ENCODE measurements at regions of chr6 and their contacts with region 1.

Region 1: GRCh38 chr6:30717042-30717844 is at the start of gene MDC1:
- DNase-seq: peak; percentile 100
- ATAC-seq: peak; percentile 79
- H3K4me3 Mint-ChIP-seq: peak within 1 kb of the TSS; percentile 99
- H3K27ac Mint-ChIP-seq: peak within 1 kb of the TSS; percentile 100
- H3K4me1 Mint-ChIP-seq: peaks cover 52% of the 10 kb centered on the region
- H3K27me3 Mint-ChIP-seq: no peaks in the 10 kb centered on the region
- total RNA-seq, gene MDC1: 67.4 to 83.9 TPM

Region 2: GRCh38 chr6:30259140-30260035 is 457.9 kb before region 1 on chr6:
- CTCF ChIA-PET with region 1: no interaction called
- DNase-seq: peak; percentile 71
- ATAC-seq: peak; percentile 91
- H3K4me3 Mint-ChIP-seq: peak overlapping the region; percentile 85
- H3K27ac Mint-ChIP-seq: peak overlapping the region; percentile 73
- H3K4me1 Mint-ChIP-seq: peaks cover 18% of the 10 kb centered on the region
- H3K27me3 Mint-ChIP-seq: peaks cover 36% of the 10 kb centered on the region

Region 3: GRCh38 chr6:30614843-30615218 is 102.4 kb before region 1 on chr6:
- CTCF ChIA-PET with region 1: interaction called, 24 read pairs
- DNase-seq: peak; percentile 94
- ATAC-seq: peak; percentile 59
- H3K4me3 Mint-ChIP-seq: peak overlapping the region; percentile 97
- H3K27ac Mint-ChIP-seq: peak overlapping the region; percentile 100
- H3K4me1 Mint-ChIP-seq: peaks cover 57% of the 10 kb centered on the region
- H3K27me3 Mint-ChIP-seq: peaks cover 3% of the 10 kb centered on the region

Region 4: DNA sequence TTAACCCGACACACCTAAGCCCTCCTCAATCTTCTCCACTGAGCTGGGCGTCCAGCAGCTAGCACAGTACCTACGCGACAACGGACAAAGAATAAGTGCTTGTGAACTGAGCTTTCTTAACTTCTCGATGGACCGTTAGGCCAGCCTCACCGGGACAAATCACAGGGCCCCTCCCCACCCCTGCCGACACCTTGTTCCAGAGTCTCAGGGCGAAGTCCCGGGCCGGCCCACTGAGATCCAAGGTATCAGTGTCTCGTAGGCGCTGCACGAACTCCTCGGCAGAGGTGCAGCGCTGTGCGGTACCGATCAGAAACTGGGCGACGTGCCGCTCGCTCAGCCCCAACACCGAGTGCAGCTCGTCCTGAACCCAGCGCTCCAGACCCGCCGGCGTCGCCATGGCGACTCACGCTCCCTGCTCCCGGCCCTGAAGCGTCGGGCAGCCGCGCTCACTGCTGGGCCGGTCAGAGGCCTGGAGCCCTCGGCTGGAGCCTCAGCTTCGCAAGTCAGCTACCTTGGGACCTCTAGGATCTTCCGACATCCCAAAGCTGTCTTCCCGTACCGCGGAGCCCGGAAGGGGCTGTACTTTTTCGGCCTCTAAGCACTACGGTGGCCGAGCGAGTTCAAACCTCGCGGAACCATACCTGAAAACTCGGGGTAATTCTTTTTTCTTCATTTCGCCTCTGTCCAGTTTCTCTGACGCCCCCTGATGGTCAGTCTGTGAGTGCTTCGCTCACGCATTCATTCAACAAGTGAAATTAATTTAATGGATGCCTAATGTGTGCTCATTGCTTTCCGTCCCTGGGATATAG is 44.6 kb before region 1 on chr6 and contains the start of gene DHX16:
- CTCF ChIA-PET with region 1: interaction called, 936 read pairs
- DNase-seq: peak; percentile 95
- ATAC-seq: peak; percentile 85
- H3K4me3 Mint-ChIP-seq: peak within 1 kb of the TSS; percentile 94
- H3K27ac Mint-ChIP-seq: peak within 1 kb of the TSS; percentile 79
- H3K4me1 Mint-ChIP-seq: peaks cover 38% of the 10 kb centered on the region
- H3K27me3 Mint-ChIP-seq: no peaks in the 10 kb centered on the region
- total RNA-seq, gene DHX16: 39.5 to 49.6 TPM

Region 5: GRCh38 chr6:30686908-30687658 is 30.2 kb before region 1 on chr6:
- CTCF ChIA-PET with region 1: interaction called, 936 read pairs
- DNase-seq: peak; percentile 88
- ATAC-seq: peak; percentile 37
- H3K4me3 Mint-ChIP-seq: peak overlapping the region; percentile 90
- H3K27ac Mint-ChIP-seq: peak overlapping the region; percentile 87
- H3K4me1 Mint-ChIP-seq: peaks cover 38% of the 10 kb centered on the region
- H3K27me3 Mint-ChIP-seq: no peaks in the 10 kb centered on the region

Region 6: DNA sequence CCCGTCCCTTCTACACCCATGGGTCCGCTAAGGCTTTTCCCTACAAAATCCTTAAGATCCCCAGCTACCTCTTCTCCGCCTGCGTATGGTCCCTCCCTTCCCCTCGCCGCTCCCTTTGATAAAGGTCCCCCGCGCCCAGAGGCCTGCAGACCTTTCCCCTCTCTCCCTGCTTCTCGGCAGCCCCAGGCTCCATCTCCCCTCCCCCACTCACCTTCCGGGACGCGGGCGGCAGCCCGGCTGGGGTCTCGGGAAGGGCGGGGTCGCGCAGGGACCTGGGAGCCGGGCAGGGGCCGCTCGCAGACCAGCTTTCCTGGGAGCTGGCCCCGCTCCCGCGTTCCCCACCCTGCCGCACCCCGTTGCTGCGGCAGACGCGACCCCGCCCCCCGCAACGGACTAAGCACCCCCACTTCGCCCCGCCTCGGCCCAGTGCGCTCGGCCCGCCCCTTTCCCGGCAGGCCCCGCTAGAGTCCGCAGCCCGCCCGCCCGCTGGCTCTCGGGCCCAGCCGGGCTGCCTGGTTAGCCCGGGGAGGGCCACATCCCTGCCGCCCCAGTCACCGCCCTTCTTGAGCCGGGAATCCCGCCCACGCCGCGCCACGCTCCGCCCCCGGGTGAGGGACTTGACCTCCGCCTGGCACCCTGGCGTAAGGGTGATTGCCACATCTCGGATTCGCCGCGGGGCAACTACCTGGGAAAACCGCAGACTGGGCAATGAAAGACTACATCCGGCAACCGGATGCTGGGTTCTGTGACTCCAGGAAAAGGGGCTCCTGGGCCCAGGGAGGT is 25.3 kb after region 1 on chr6 and contains the start of gene FLOT1:
- CTCF ChIA-PET with region 1: interaction called, 28 read pairs
- DNase-seq: peak; percentile 96
- ATAC-seq: peak; percentile 84
- H3K4me3 Mint-ChIP-seq: peak within 1 kb of the TSS; percentile 95
- H3K27ac Mint-ChIP-seq: peak within 1 kb of the TSS; percentile 83
- H3K4me1 Mint-ChIP-seq: peaks cover 59% of the 10 kb centered on the region
- H3K27me3 Mint-ChIP-seq: no peaks in the 10 kb centered on the region
- total RNA-seq, gene FLOT1: 165 to 184 TPM

Region 7: GRCh38 chr6:30793521-30794194 is 76.4 kb after region 1 on chr6:
- CTCF ChIA-PET with region 1: no interaction called
- DNase-seq: no peak
- ATAC-seq: peak; percentile 88
- H3K4me3 Mint-ChIP-seq: peak overlapping the region; percentile 56
- H3K27ac Mint-ChIP-seq: peak overlapping the region; percentile 79
- H3K4me1 Mint-ChIP-seq: peaks cover 34% of the 10 kb centered on the region
- H3K27me3 Mint-ChIP-seq: no peaks in the 10 kb centered on the region